RWPE1 (cell line): ENCODE measurements at regions of chr15 and their contacts with region 1.

Region 1: DNA sequence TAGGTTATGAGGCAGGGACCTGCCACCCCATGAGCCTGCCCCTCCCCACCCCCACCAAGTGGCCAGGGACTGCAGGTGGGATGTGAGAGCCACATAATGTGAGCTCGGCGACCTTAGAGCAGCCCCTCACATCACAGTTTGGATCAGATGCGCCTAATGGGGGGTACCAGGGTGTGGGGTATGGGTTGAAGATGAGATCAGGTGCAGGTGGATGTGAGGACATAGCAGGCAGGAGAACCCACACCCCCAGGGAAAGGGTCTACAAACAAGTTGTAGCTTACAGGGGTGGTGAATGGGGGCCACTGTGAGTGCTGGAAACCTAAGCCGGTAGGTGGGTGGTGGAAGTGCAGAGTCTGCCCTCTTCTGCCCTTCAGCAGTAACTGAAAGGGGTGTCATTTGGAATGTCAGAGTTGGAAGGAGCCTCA is 94.0 kb downstream of the CORO2B start:
- DNase-seq: no peak
- H3K27ac ChIP-seq: no peak overlapping the region
- CTCF ChIP-seq: peak; percentile 11; the same call in 1 of the 2 replicates

Region 2: GRCh38 chr15:68559345-68560310 is 113.2 kb before region 1 on chr15:
- CTCF ChIA-PET with region 1: interaction called, 90 read pairs
- POLR2A ChIA-PET with region 1: interaction called, 4 read pairs
- DNase-seq: peak; percentile 78
- H3K27ac ChIP-seq: no peak overlapping the region
- CTCF ChIP-seq: peak; percentile 99

Region 3: DNA sequence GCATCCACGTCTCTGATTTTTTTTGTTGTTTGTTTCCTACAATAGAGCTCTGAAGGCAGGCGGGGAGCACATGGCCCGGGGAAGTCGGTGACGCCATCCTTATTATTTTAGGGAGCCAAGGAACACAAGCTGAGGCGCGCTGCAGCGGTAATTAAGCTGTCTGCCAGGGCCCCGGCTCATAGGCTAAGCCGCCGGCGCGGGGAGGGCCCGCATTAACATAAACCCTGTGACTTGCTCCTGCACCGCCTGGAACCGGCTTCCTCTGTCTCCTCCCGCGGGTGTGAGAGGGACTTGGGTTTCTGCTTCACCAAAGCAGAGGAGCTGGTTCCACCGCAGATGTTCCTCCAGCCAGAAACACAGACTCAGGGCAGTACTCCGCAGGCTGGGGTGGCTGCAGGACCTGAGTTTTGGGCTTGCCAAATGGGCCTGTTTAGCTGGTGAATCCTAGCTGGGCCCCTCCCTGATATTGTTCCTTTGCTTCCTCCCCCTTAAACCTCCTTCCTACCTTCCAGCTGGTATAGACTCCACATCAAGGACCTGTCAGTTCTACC is 122.6 kb after region 1 on chr15:
- CTCF ChIA-PET with region 1: no interaction called
- POLR2A ChIA-PET with region 1: no interaction called
- DNase-seq: peak; percentile 95
- H3K27ac ChIP-seq: peak overlapping the region; percentile 87
- CTCF ChIP-seq: no peak